Heart left ventricle (tissue), 16 donors: ENCODE measurements at regions of chr15 and their contacts with region 1.

Region 1: DNA sequence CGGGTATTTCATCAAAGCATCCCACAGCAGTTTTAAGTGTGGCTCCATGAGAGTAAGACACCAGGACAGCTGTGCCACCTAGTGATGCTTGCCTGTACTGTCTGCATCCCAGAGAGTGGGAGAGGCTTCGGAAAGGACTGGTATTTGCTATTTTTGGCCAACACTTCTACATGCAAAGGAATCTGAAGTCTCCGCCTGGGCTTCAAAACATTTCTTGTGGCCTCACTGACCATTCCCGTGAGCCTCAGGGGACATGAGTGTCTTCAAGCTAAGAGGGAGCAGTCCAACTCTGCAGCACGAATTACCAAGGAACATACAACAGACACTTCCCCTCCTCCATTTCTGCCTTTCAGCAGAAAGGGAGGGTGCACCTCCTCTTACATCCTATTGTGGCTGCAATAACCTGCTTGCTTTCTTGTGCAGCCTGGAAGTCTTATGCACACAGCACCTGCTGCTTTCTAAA is 177.5 kb downstream of the RORA start:
- DNase-seq: peak in 4 of 5 donors; percentile 37 to 44 (median 43)
- ATAC-seq: peak; percentile 79 to 92 (median 91)
- H3K4me3 ChIP-seq: no peak overlapping the region
- H3K27ac ChIP-seq: no peak overlapping the region
- H3K4me1 ChIP-seq: peaks cover 0 to 12% (median 4%) of the 10 kb centered on the region in 12 donors
- H3K27me3 ChIP-seq: no peaks in the 10 kb centered on the region
- CTCF ChIP-seq: peak; percentile 31 to 76 (median 64)
- POLR2A ChIP-seq: no peak

Region 2: DNA sequence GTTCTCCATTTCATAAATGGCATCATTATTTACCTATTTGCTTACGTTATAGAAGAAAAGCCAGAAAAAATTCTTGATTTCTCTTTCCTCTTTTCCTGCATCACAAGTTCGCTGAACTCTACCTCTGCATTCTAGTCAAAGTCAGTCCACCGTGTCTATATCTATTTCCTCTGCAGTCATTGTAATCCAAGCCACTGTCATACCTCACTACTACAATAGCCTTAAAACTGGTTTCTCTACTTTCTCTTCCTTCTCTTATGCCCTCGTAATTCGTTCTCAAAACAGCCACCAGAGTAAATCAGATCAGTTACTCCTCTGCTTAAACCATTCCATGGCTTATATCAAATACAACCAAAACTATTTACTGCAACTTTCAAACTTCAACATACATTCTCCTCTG is 1627.0 kb before region 1 on chr15:
- intact Hi-C with region 1: no loop called
- DNase-seq: no peak
- ATAC-seq: no peak
- H3K4me3 ChIP-seq: no peak overlapping the region
- H3K27ac ChIP-seq: no peak overlapping the region
- H3K4me1 ChIP-seq: no peaks in the 10 kb centered on the region
- H3K27me3 ChIP-seq: peaks cover 0 to 15% (median 0%) of the 10 kb centered on the region in 9 donors
- CTCF ChIP-seq: no peak
- POLR2A ChIP-seq: no peak

Region 3: GRCh38 chr15:60585743-60586708 is 465.6 kb before region 1 on chr15:
- intact Hi-C with region 1: loop called (anchors 1 to 10 kb)
- DNase-seq: peak in 4 of 5 donors; percentile 33 to 60 (median 40)
- ATAC-seq: peak; percentile 60 to 81 (median 79)
- H3K4me3 ChIP-seq: no peak overlapping the region
- H3K27ac ChIP-seq: peak overlapping the region in 2 of 12 donors; percentile 7 to 73
- H3K4me1 ChIP-seq: peaks cover 0 to 66% (median 23%) of the 10 kb centered on the region in 12 donors
- H3K27me3 ChIP-seq: no peaks in the 10 kb centered on the region
- CTCF ChIP-seq: peak; percentile 82 to 97 (median 91)
- POLR2A ChIP-seq: no peak

Region 4: DNA sequence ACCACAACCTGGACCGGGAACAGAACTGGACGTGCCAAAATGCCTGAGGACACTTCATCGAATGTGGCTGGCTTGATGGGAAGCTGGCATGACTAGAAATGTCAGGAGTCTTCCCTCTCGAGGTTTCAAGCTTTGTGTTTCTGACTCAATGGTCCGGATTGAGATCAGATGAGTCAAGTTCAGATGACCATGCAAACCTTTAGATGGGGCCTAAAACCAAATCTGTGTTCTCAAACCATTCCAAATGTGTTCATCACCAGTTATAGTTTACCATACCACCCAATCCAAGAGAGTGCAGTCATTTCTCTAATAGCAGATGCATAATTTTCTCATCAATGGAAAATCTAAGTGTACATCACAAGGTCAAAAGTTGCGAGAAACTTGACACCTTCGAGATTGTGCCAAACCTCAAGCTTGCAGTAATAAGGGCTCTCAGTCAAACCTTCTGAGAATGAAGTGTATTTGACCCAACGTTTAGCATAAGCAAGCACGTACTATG is 191.6 kb before region 1 on chr15:
- intact Hi-C with region 1: no loop called
- DNase-seq: no peak
- ATAC-seq: no peak
- H3K4me3 ChIP-seq: no peak overlapping the region
- H3K27ac ChIP-seq: no peak overlapping the region
- H3K4me1 ChIP-seq: no peaks in the 10 kb centered on the region
- H3K27me3 ChIP-seq: no peaks in the 10 kb centered on the region
- CTCF ChIP-seq: no peak
- POLR2A ChIP-seq: no peak

Region 5: GRCh38 chr15:61032600-61033281 is 18.9 kb before region 1 on chr15:
- intact Hi-C with region 1: no loop called
- DNase-seq: no peak
- ATAC-seq: peak in 2 of 4 donors; percentile 17 to 48
- H3K4me3 ChIP-seq: no peak overlapping the region
- H3K27ac ChIP-seq: peak overlapping the region in 2 of 12 donors; percentile 7 to 66
- H3K4me1 ChIP-seq: peaks cover 6 to 54% (median 27%) of the 10 kb centered on the region in 12 donors
- H3K27me3 ChIP-seq: no peaks in the 10 kb centered on the region
- CTCF ChIP-seq: no peak
- POLR2A ChIP-seq: no peak